Gastrocnemius medialis (tissue), 4 donors: ENCODE measurements at regions of chr19 and their contacts with region 1.

Region 1: DNA sequence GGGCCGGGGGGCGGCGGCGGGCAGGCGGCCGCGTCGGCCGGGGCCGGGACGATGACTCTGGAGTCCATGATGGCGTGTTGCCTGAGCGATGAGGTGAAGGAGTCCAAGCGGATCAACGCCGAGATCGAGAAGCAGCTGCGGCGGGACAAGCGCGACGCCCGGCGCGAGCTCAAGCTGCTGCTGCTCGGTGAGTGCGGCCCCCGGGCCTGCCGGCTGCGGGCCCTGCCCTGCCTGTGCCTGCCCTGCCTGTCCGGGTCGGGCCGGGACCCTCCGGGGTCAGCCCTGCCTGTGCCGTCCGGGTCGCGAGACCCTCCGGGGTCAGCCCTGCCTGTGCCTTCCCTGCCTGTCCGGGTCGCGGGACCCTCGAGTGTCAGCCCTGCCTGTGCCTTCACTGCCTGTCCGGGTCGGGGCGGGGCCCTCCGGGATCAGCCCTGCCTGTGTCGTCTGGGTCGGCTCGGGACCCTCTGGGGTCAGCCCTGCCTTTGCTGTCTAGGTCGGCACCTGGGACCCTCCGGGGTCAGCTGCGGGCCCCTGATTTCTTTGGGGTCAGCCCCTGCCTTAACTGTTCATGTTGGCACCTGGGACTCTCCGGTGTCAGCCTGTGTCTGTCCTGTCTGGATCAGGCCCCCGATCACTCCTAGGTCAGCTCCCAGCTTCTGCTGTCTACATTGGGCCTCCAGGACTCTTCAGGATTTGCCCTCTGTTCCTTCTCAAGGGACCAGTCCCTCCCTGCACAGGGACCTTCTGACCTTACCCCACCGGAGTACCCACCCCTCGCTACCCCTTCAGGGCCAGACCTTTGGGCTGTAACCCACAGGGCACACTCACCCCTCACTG is 657 bp downstream of the GNA11 start:
- DNase-seq: no peak
- ATAC-seq: no peak
- H3K4me3 ChIP-seq: peak overlapping the region; percentile 69 to 84 (median 78)
- H3K27ac ChIP-seq: peak overlapping the region; percentile 79 to 92 (median 85)
- H3K4me1 ChIP-seq: peaks cover 39 to 50% of the 10 kb centered on the region in 2 donors
- H3K27me3 ChIP-seq: no peaks in the 10 kb centered on the region
- CTCF ChIP-seq: no peak
- POLR2A ChIP-seq: no peak

Region 2: GRCh38 chr19:1521636-1522035 is 1573.2 kb before region 1 on chr19:
- in situ Hi-C with region 1: no loop called
- intact Hi-C with region 1: no loop called
- DNase-seq: no peak
- ATAC-seq: no peak
- H3K4me3 ChIP-seq: no peak overlapping the region
- H3K27ac ChIP-seq: no peak overlapping the region
- H3K4me1 ChIP-seq: no peaks in the 10 kb centered on the region
- H3K27me3 ChIP-seq: peaks cover 23 to 31% (median 30%) of the 10 kb centered on the region in 3 donors
- CTCF ChIP-seq: no peak
- POLR2A ChIP-seq: no peak

Region 3: GRCh38 chr19:2900296-2901252 is 194.2 kb before region 1 on chr19 and contains the start of gene ZNF57:
- in situ Hi-C with region 1: no loop called
- intact Hi-C with region 1: loop called (anchors 5 kb)
- DNase-seq: peak; percentile 99
- ATAC-seq: peak; percentile 100
- H3K4me3 ChIP-seq: peak within 1 kb of the TSS; percentile 71 to 88 (median 84)
- H3K27ac ChIP-seq: peak within 1 kb of the TSS; percentile 71 to 82 (median 76)
- H3K4me1 ChIP-seq: peaks cover 8 to 10% of the 10 kb centered on the region in 2 donors
- H3K27me3 ChIP-seq: no peaks in the 10 kb centered on the region
- CTCF ChIP-seq: no peak
- POLR2A ChIP-seq: peak; percentile 42 to 52
- total RNA-seq, gene ZNF57: 0.44 to 2.1 (median 0.83) TPM

Region 4: GRCh38 chr19:2977001-2977685 is 117.7 kb before region 1 on chr19 and contains the start of gene TLE6:
- in situ Hi-C with region 1: loop called in 1 of 4 experiments (anchors 25 kb)
- intact Hi-C with region 1: loop called (anchors 1 kb)
- DNase-seq: peak; percentile 93 to 94
- ATAC-seq: peak; percentile 88 to 89
- H3K4me3 ChIP-seq: peak within 1 kb of the TSS; percentile 54 to 81 (median 66)
- H3K27ac ChIP-seq: peak within 1 kb of the TSS; percentile 48 to 81 (median 72)
- H3K4me1 ChIP-seq: peaks cover 37 to 46% of the 10 kb centered on the region in 2 donors
- H3K27me3 ChIP-seq: no peaks in the 10 kb centered on the region
- CTCF ChIP-seq: no peak
- POLR2A ChIP-seq: no peak
- total RNA-seq, gene TLE6: 0.62 to 1.2 TPM in 2 of 4 donors, not detected in the others

Region 5: GRCh38 chr19:3075895-3076431 is 18.9 kb before region 1 on chr19:
- in situ Hi-C with region 1: no loop called
- intact Hi-C with region 1: loop called (anchors 2 kb)
- DNase-seq: no peak
- ATAC-seq: peak; percentile 55 to 61
- H3K4me3 ChIP-seq: peak overlapping the region in 2 of 4 donors; percentile 13 to 26
- H3K27ac ChIP-seq: peak overlapping the region in 2 of 4 donors; percentile 3 to 70
- H3K4me1 ChIP-seq: peaks cover 9 to 11% of the 10 kb centered on the region in 2 donors
- H3K27me3 ChIP-seq: no peaks in the 10 kb centered on the region
- CTCF ChIP-seq: peak; percentile 76 to 98 (median 96)
- POLR2A ChIP-seq: no peak

Region 6: DNA sequence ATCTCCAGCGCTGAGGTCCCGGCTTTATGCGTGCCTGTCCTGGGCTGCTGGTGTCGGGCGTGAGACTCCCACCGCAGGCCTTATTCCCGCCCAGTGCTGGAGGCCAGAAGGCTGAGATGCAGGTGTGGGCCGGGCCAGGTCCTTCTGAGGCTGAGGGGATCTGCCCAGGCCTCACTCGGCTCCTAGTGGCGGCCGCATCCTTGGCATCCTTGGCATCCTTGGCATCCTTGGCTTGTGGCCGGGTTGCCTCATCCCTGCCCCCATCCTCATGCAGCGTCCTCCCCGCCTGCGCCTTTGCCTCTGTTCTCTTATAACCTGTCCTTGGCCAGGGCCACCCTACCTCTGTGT is 21.4 kb after region 1 on chr19:
- in situ Hi-C with region 1: no loop called
- intact Hi-C with region 1: no loop called
- DNase-seq: no peak
- ATAC-seq: no peak
- H3K4me3 ChIP-seq: no peak overlapping the region
- H3K27ac ChIP-seq: no peak overlapping the region
- H3K4me1 ChIP-seq: no peaks in the 10 kb centered on the region
- H3K27me3 ChIP-seq: no peaks in the 10 kb centered on the region
- CTCF ChIP-seq: no peak
- POLR2A ChIP-seq: no peak

Region 7: GRCh38 chr19:3505598-3506383 is 411.0 kb after region 1 on chr19 and contains the start of gene FZR1:
- in situ Hi-C with region 1: no loop called
- intact Hi-C with region 1: no loop called
- DNase-seq: peak; percentile 96 to 98
- ATAC-seq: peak; percentile 92 to 95
- H3K4me3 ChIP-seq: peak within 1 kb of the TSS; percentile 56 to 100 (median 82)
- H3K27ac ChIP-seq: peak within 1 kb of the TSS; percentile 80 to 90 (median 84)
- H3K4me1 ChIP-seq: peaks cover 15 to 35% of the 10 kb centered on the region in 2 donors
- H3K27me3 ChIP-seq: no peaks in the 10 kb centered on the region
- CTCF ChIP-seq: no peak
- POLR2A ChIP-seq: peak; percentile 88
- total RNA-seq, gene FZR1: 15.9 to 32.0 (median 21.0) TPM